GM10248 (cell line): ENCODE measurements at regions of chr18 and their contacts with region 1.

Region 1: DNA sequence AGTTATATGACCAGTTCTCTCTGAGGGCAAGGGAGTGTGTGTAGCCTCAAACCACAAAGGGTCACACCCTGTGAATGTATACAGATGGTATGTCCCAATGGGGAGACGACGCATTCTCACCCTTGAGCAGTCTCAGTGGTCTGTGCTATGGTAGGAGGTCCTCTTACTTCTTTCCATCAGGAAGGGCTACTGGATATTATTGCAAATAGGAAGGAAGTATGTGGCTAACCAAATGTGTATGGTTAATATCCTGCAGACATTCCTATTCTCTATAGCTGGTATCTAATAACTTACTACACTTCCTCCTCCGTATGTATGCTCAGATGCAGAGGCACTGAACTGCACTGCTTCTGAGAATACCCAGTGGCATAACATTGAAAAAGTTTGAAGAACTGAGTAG is 306.7 kb upstream of the CCDC68 start:
- DNase-seq: no peak
- CTCF ChIP-seq: no peak

Region 2: GRCh38 chr18:55113800-55114199 is 152.2 kb before region 1 on chr18:
- CTCF ChIA-PET with region 1: no interaction called
- POLR2A ChIA-PET with region 1: no interaction called
- DNase-seq: no peak
- CTCF ChIP-seq: no peak

Region 3: GRCh38 chr18:55124078-55124763 is 141.8 kb before region 1 on chr18:
- CTCF ChIA-PET with region 1: no interaction called
- POLR2A ChIA-PET with region 1: no interaction called
- DNase-seq: no peak
- CTCF ChIP-seq: no peak

Region 4: DNA sequence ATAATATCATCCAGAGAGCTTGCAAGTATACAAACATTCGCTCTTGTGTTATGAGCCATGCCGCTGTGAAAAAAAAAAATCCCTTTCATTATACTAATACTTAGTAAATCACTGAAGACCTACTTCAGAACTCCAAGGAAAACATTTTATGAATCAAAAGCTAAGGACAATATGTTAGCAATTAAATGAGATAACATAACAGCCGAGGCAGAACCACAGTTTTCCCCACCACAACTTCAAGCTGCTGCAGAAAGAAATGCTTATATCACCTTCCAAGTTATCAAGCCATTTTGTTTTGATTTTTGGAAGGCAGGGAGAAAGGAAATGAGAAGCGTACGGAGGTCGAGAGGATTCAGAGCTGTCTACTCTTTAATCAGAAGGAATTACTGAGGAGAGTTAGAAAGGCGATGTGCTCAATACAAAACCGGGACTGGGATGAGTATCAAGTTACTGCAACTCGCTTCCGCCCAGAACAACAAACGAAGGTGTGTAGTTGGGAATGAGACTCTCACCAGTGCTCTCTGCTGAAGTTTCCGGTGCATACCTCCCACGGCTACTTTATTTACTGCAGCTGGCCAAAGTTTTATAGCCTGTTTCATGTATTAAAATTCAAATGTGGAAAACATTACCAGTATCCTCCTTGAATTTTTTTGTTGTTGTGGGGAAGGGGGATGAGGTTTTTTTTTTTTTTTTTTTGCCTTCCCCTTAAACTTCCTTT is 14.6 kb before region 1 on chr18:
- CTCF ChIA-PET with region 1: interaction called, 23 read pairs
- POLR2A ChIA-PET with region 1: interaction called, 5 read pairs
- DNase-seq: no peak
- CTCF ChIP-seq: no peak

Region 5: DNA sequence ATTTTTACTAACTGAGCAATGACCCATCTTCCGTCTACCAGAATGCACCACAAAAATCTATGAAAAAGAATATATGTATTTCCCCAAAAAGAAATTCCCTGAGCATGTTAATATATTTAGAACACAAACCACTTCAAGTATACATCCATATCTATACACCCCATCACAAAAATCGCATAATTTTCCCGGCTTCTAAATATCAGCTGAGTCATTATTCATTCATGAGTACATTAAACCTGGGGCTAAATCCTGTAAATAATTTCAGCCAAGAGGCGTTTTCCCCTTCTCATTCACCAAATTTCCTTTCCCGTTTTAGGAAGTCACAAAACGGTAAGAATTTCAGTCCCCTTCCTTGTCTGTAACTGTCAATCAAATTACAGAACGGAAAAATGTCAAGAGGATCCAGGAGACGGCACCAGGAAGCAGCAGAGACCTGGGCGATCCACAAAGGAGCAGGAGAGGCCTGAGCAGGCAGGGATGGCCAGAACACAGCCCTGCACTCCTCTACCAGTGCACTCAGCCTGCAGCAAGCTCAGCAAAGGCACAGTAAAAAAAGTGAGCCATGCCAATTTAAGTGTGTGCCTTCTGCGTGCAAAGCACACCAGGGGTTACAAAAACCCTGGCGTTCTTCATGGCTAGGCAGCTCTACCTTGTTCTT is 21.3 kb after region 1 on chr18:
- CTCF ChIA-PET with region 1: interaction called, 22 read pairs
- POLR2A ChIA-PET with region 1: no interaction called
- DNase-seq: no peak
- CTCF ChIP-seq: no peak

Region 6: GRCh38 chr18:55300421-55300935 is 34.5 kb after region 1 on chr18:
- CTCF ChIA-PET with region 1: interaction called, 10 read pairs
- POLR2A ChIA-PET with region 1: interaction called, 6 read pairs
- DNase-seq: no peak
- CTCF ChIP-seq: no peak

Region 7: DNA sequence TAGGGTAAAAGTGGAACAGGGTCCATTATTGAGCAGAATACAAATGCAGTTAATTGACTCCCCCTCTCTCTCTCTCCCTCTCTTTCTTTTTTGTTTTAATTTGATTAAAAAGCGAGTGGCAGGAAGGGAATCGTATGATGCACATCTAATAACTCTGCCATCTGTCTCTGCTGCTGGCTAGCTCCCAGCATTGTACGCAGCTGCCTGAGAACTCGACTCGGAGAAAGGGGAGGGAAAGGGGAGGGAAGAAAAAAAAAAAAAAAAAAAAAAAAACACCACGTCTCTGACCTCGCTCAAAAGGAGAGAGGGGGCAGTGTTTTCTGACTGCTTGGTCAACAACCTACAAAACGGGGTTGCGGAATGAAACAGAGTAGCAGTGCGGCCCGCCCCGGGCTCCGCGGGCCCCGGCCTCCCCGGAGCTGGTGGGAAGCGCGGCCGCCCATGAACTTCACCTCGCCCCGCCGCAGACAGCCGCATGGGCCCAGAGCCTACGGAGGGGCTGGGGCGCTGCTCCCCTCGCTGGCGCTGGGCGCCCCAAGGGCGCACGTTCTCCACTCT is 56.3 kb after region 1 on chr18:
- CTCF ChIA-PET with region 1: interaction called, 9 read pairs
- POLR2A ChIA-PET with region 1: interaction called, 10 read pairs
- DNase-seq: peak; percentile 78
- CTCF ChIP-seq: no peak